ENCODE measurements at regions of chr17 and their contacts with region 1.

Region 1: GRCh38 chr17:50218771-50219315 is 17.4 kb upstream of the COL1A1 start:
- DNase-seq: no peak
- H3K4me3 ChIP-seq: no peak overlapping the region
- H3K27ac ChIP-seq: peak overlapping the region; percentile 87 to 90
- H3K4me1 ChIP-seq: peaks cover 21 to 55% of the 10 kb centered on the region in 2 donors
- H3K27me3 ChIP-seq: no peaks in the 10 kb centered on the region
- CTCF ChIP-seq: no peak

Region 2: DNA sequence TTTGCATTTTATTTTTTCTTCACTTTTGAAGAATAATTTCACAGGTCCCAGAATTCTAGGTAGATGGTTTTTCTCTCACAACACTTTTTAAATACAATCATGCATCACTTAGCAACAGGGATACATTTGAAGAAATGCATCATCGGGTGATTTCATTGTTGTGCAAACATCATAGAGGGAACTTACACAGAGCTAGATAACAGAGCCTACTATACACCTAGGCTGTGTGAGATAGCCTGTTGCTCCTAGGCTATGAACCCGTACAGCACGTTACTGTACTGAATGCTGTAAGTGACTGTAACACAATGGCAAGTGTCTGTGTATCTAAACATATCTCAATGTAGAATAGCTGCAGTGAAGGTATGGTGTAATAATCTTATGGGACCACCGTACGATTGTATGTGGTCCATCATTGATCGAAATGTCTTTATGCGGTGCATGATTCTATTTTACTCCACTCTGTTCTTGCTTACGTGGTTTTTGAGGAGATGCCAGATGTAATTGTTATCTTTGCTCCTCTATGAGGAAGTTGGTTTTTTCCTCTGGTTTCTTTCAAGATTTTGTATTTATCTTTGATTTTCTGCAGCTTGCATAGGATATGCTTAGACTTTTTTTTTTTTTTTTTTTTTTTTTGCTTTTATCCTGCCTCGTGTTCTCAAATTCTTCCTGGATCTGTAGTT is 19.9 kb after region 1 on chr17:
- intact Hi-C with region 1: loop called (anchors 1 kb)
- DNase-seq: no peak
- H3K4me3 ChIP-seq: no peak overlapping the region
- H3K27ac ChIP-seq: no peak overlapping the region
- H3K4me1 ChIP-seq: peaks cover 0 to 14% of the 10 kb centered on the region in 2 donors
- H3K27me3 ChIP-seq: no peaks in the 10 kb centered on the region
- CTCF ChIP-seq: no peak

Region 3: GRCh38 chr17:50266303-50267073 is 47.6 kb after region 1 on chr17:
- intact Hi-C with region 1: no loop called
- DNase-seq: peak in 1 of 2 donors; percentile 82
- H3K4me3 ChIP-seq: peak overlapping the region in 1 of 2 donors; percentile 37
- H3K27ac ChIP-seq: peak overlapping the region; percentile 32 to 49
- H3K4me1 ChIP-seq: peaks cover 29 to 42% of the 10 kb centered on the region in 2 donors
- H3K27me3 ChIP-seq: no peaks in the 10 kb centered on the region
- CTCF ChIP-seq: peak in 1 of 3 experiments; percentile 19